GM10248 (cell line): ENCODE measurements at regions of chr7 and their contacts with region 1.

Region 1: DNA sequence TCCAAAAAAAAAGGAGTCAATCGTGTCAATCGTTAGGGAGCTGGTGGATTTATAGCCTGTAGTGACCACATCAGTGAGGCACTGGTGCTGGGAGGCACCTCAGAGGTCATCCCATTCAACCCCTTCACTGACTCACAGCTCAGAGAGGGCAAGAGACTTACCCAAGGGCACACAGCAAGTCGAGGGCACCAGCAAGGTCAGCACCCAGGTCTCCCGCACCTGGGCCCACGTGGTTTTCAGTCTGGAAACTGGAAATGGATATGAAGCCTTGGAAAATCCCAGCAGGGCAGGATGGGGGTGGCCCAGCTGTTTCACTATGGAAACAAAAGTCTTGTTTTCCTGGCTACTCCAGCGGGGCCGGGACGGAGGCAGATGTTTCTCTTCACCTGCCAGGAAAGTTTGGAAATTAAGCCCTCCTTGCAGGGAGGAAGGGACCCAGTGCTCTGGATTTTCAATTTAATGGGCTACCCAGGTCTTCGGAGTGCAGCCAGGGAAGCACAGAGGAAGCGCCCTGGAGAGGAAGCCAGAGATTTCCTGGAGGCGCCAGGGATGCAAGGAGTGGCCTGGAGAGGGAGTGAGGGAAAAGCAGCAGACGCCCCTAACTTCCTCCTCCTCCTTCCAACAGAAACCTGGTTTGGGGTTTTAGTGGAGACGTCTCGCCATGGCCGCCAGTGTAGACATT is 157.2 kb upstream of the TNRC18 start:
- DNase-seq: no peak
- CTCF ChIP-seq: no peak

Region 2: DNA sequence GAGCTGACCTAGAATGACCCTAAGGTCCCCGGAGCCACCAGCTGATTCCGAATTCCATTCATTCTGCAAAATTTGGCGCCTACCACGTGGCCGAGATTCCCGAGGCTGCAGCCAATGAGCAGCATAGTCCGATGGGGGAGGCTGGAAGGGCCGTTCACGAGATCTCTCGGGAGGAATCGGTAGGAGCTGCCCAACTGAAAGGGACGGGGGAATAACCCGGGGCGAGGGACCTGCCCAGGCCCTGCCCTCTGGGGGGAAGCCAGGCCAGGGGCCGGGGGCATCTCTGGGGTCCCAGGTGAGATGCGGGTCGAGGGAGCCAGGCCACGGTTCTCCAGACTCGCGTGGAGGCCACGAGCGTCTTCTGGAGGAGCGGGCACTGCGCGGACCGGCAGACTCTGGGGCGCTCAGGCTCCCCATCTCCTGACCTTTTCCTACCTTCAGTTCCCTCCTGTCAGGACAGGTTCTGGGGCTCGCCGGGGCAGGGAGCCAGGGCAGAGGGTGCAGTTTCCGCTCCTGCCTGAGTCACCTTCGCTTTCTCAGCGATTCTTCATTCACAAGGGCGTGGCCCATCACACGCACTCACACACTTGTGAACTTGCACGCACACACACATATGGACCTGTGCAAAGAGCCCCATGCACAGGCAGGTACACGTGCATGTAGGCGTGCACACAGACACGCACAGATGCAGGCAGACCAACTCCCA is 27.2 kb after region 1 on chr7:
- CTCF ChIA-PET with region 1: interaction called, 4 read pairs
- POLR2A ChIA-PET with region 1: interaction called, 10 read pairs
- DNase-seq: no peak
- CTCF ChIP-seq: no peak